Right ventricle myocardium inferior (tissue), 1 donor: ENCODE measurements at regions of chr3 and their contacts with region 1.

Region 1: GRCh38 chr3:159322322-159322939 is 520.6 kb downstream of the MFSD1 start:
- DNase-seq: peak; percentile 67
- ATAC-seq: no peak

Region 2: DNA sequence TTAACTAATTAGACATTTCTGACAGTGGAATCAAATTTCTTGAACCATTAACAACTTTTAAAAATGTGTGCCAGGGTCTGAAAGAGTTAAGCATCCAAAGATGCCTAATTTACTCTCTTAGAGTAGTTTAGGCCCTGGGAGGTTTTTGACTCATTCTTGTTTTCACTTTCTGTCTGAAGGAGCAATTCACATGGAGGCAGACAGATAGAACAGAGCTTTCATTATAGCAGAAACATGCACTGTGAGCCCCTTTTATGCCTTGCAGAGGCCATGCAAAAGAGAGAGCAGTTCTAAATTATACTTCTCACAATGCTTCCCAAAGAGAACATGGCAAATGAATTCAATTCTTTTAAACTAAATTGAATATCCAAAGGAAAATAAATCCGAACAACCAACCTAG is 34.2 kb after region 1 on chr3:
- intact Hi-C with region 1: no loop called
- DNase-seq: no peak
- ATAC-seq: no peak

Region 3: DNA sequence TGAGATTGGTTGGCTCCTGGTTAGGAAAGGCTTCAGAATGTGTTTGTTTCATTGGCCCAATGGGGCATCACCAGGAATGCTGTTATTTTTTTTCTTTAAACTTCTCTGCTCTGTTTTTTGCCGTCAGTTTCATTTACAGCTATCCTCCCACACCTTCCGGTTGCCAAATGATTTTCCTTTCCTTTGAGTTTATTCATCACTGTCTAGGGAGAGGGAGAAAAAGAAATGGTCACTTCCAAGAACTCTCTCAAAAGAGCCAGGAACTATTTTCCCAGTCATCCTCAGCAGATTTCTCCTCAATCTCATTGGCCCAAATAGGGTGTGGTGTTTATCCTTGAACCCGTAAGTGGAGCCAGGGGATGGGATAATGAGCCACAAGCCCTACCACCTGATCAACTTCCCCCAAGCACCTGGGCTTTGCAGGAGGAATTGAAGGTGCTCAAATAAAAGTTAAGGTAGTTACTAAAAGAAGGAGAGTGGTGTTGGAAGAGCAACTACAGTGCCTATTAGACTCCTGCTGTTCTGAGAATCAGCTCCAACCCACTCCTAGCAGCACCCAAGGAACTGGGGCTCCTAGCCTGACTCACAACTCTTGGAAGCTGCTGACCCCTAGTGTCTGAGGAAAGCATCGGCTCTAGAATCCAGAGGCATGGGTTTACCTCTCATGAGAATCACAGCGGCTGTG is 482.4 kb after region 1 on chr3:
- intact Hi-C with region 1: loop called (anchors 10 kb)
- DNase-seq: no peak
- ATAC-seq: peak; percentile 93